ENCODE measurements at regions of chr2 and their contacts with region 1.

Region 1: DNA sequence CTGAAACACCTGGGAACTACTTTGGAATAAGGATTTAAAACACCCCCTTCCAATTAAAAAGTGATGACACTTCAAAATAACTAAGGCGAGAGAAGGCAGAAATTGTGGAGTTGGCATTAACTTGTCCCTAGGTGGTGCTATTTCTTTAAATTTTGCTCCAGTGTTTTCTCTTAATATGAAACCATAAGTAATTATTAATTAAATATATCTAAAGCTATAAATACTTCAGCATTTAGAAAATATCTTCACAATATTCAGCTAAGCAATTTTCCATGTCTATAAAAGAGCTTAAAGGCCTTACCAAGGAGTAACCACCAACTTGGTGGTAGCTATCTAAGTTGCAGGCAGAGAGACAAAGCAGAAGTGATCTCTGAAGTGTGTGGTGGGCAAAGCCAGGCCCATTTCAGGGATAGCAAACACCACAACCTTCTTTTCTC is 186.8 kb upstream of the PGAP1 start:
- DNase-seq: peak; percentile 37
- H3K4me3 ChIP-seq: no peak overlapping the region
- H3K27ac ChIP-seq: peak overlapping the region in 1 of 2 experiments; percentile 84; a peak in 2 of 4 replicates
- H3K4me1 ChIP-seq: peaks cover 5 to 16% of the 10 kb centered on the region in 2 experiments; a peak in 2 of 4 replicates
- H3K27me3 ChIP-seq: no peaks in the 10 kb centered on the region
- CTCF ChIP-seq: peak; percentile 72
- EP300 ChIP-seq: no peak
- RAD21 ChIP-seq: peak; percentile 79

Region 2: DNA sequence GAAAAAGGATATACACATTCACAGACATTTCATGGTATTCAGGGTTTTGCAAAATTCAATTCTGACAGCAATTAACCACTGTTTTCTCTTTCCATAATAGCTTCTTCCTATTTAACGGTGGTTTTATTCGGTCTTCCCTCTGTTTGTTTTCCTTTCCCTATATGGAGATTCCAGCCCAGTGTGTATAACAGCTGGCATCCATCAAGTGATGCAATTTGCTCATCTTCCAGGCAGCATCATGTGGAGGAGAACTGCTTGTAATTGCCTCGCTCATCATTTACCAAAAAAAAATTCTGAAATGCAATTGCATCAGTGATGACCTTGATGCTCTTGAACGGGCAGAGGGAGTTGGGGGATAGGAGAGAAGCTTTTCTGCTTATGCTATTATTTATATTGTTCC is 20.9 kb before region 1 on chr2:
- CTCF ChIA-PET with region 1: interaction called, 25 read pairs
- POLR2A ChIA-PET with region 1: no interaction called
- DNase-seq: peak; percentile 46
- H3K4me3 ChIP-seq: no peak overlapping the region
- H3K27ac ChIP-seq: peak overlapping the region; percentile 56 to 93; a peak in 3 of 4 replicates
- H3K4me1 ChIP-seq: peaks cover 15 to 76% of the 10 kb centered on the region in 2 experiments; a peak in 3 of 4 replicates
- H3K27me3 ChIP-seq: no peaks in the 10 kb centered on the region
- CTCF ChIP-seq: no peak
- EP300 ChIP-seq: peak; percentile 33 to 98; a peak in 3 of 4 replicates
- RAD21 ChIP-seq: peak; percentile 52

Region 3: GRCh38 chr2:197159661-197160211 is 46.4 kb after region 1 on chr2:
- CTCF ChIA-PET with region 1: interaction called, 21 read pairs
- POLR2A ChIA-PET with region 1: no interaction called
- DNase-seq: no peak
- H3K4me3 ChIP-seq: no peak overlapping the region
- H3K27ac ChIP-seq: peak overlapping the region; percentile 58 to 70; a peak in 3 of 4 replicates
- H3K4me1 ChIP-seq: peaks cover 16 to 27% of the 10 kb centered on the region in 2 experiments; a peak in 3 of 4 replicates
- H3K27me3 ChIP-seq: no peaks in the 10 kb centered on the region
- CTCF ChIP-seq: no peak
- EP300 ChIP-seq: no peak
- RAD21 ChIP-seq: no peak

Region 4: GRCh38 chr2:197191177-197191939 is 78.1 kb after region 1 on chr2:
- CTCF ChIA-PET with region 1: interaction called, 26 read pairs
- POLR2A ChIA-PET with region 1: no interaction called
- DNase-seq: peak; percentile 48
- H3K4me3 ChIP-seq: no peak overlapping the region; a peak in 1 of 4 replicates
- H3K27ac ChIP-seq: peak overlapping the region in 1 of 2 experiments; percentile 69; a peak in 2 of 4 replicates
- H3K4me1 ChIP-seq: peaks cover 0 to 27% of the 10 kb centered on the region in 2 experiments; a peak in 2 of 4 replicates
- H3K27me3 ChIP-seq: no peaks in the 10 kb centered on the region
- CTCF ChIP-seq: peak; percentile 83
- EP300 ChIP-seq: no peak
- RAD21 ChIP-seq: peak; percentile 89

Region 5: GRCh38 chr2:197378494-197379307 is 265.4 kb after region 1 on chr2:
- CTCF ChIA-PET with region 1: interaction called, 16 read pairs
- POLR2A ChIA-PET with region 1: no interaction called
- DNase-seq: peak; percentile 81
- H3K4me3 ChIP-seq: no peak overlapping the region; a peak in 1 of 4 replicates
- H3K27ac ChIP-seq: peak overlapping the region; percentile 11 to 63; a peak in 2 of 4 replicates
- H3K4me1 ChIP-seq: peaks cover 6 to 8% of the 10 kb centered on the region in 2 experiments; a peak in 2 of 4 replicates
- H3K27me3 ChIP-seq: no peaks in the 10 kb centered on the region
- CTCF ChIP-seq: peak; percentile 91
- EP300 ChIP-seq: no peak
- RAD21 ChIP-seq: peak; percentile 99

Measured in SK-N-SH (cell line).